A549 (cell line): ENCODE measurements at regions of chr4 and their contacts with region 1.

Region 1: GRCh38 chr4:138090150-138090917 is 151.8 kb downstream of the SLC7A11 start:
- DNase-seq: peak; percentile 68 to 70
- ATAC-seq: peak; percentile 89 to 98
- H3K4me3 ChIP-seq: peak overlapping the region; percentile 29; the same call in 1 of the 3 replicates
- H3K27ac ChIP-seq: peak overlapping the region in 1 of 2 experiments; percentile 41; a peak in 1 of 6 replicates
- H3K4me1 ChIP-seq: no peaks in the 10 kb centered on the region
- CTCF ChIP-seq: peak; percentile 75
- EP300 ChIP-seq: no peak
- POLR2A ChIP-seq: no peak
- RAD21 ChIP-seq: peak; percentile 82

Region 2: DNA sequence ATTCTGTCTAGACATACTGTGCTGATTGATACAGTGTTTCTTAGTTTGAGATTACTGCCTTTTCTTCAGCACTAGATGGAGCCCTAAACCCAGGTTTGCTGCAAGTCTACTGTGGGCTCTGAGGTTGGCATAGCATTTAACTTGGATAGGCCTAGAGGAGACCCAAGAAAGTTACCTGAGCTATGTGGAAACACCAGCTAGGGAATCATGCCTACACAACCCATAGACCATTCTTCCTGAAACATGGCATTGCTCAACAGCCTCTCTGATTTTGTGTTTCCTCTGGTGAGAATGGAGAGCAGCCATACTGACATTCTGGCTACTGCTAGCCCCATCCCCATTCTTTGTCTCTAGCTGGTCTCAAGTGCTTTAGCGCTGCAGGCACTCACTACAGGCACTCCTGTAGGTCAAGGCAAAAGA is 270.4 kb before region 1 on chr4:
- CTCF ChIA-PET with region 1: interaction called, 13 read pairs
- POLR2A ChIA-PET with region 1: no interaction called
- DNase-seq: peak; percentile 1 to 53
- ATAC-seq: peak; percentile 89 to 96
- H3K4me3 ChIP-seq: no peak overlapping the region
- H3K27ac ChIP-seq: no peak overlapping the region
- H3K4me1 ChIP-seq: no peaks in the 10 kb centered on the region
- CTCF ChIP-seq: peak; percentile 69
- EP300 ChIP-seq: no peak
- POLR2A ChIP-seq: no peak
- RAD21 ChIP-seq: peak; percentile 78 to 83

Region 3: GRCh38 chr4:138021139-138021830 is 69.0 kb before region 1 on chr4:
- CTCF ChIA-PET with region 1: interaction called, 10 read pairs
- POLR2A ChIA-PET with region 1: no interaction called
- DNase-seq: no peak
- ATAC-seq: no peak
- H3K4me3 ChIP-seq: no peak overlapping the region
- H3K27ac ChIP-seq: no peak overlapping the region
- H3K4me1 ChIP-seq: no peaks in the 10 kb centered on the region
- CTCF ChIP-seq: no peak
- EP300 ChIP-seq: no peak
- POLR2A ChIP-seq: no peak
- RAD21 ChIP-seq: no peak

Region 4: GRCh38 chr4:138035781-138036258 is 54.5 kb before region 1 on chr4:
- CTCF ChIA-PET with region 1: interaction called, 113 read pairs
- POLR2A ChIA-PET with region 1: interaction called, 3 read pairs
- DNase-seq: peak; percentile 38 to 56
- ATAC-seq: peak; percentile 99
- H3K4me3 ChIP-seq: no peak overlapping the region
- H3K27ac ChIP-seq: peak overlapping the region in 1 of 2 experiments; percentile 61; a peak in 3 of 6 replicates
- H3K4me1 ChIP-seq: peaks cover 13% of the 10 kb centered on the region
- CTCF ChIP-seq: peak; percentile 73
- EP300 ChIP-seq: no peak
- POLR2A ChIP-seq: no peak
- RAD21 ChIP-seq: peak; percentile 87 to 89

Region 5: DNA sequence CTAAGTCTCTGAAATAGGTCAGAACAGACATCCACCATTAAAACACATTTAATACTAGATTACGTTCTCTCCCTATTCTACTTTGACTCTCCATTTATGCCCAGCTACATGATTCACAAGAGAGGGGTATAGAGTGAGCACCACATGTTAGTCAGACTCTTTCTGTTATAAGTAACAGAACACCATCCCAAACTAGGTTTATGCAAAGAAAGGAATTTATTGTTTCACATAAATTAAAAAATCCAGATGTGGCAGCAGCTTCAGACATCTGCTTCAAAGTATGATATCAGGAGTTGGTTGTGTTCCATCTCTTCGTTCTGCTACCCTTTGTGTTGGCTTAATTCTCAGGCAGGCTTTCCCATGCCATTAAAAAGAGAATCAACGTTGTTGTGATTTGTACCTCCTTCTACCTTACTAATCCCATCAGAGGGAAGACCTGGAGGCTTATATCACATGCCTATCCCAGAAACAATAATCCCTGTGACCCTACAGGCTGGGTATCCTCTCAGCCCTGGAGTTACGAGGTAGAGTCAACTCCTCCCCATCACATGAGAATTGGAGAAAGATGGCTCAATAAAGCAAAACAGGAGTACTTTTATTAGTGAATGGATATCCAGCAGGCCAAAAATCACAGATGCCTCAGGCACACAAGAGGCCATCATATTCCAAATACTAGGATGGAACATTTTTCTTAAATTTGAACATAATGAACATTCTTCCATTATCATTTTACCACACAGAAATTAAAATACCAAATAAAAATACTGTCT is 11.4 kb before region 1 on chr4:
- CTCF ChIA-PET with region 1: interaction called, 16 read pairs
- POLR2A ChIA-PET with region 1: no interaction called
- DNase-seq: no peak
- ATAC-seq: no peak
- H3K4me3 ChIP-seq: no peak overlapping the region
- H3K27ac ChIP-seq: no peak overlapping the region
- H3K4me1 ChIP-seq: no peaks in the 10 kb centered on the region
- CTCF ChIP-seq: no peak
- EP300 ChIP-seq: no peak
- POLR2A ChIP-seq: no peak
- RAD21 ChIP-seq: no peak

Region 6: GRCh38 chr4:138301531-138301930 is 211.2 kb after region 1 on chr4:
- CTCF ChIA-PET with region 1: no interaction called
- POLR2A ChIA-PET with region 1: no interaction called
- DNase-seq: no peak
- ATAC-seq: no peak
- H3K4me3 ChIP-seq: no peak overlapping the region
- H3K27ac ChIP-seq: no peak overlapping the region
- H3K4me1 ChIP-seq: no peaks in the 10 kb centered on the region
- CTCF ChIP-seq: no peak
- EP300 ChIP-seq: no peak
- POLR2A ChIP-seq: no peak
- RAD21 ChIP-seq: no peak